GM12878 (cell line): ENCODE measurements at regions of chr18 and their contacts with region 1.

Region 1: DNA sequence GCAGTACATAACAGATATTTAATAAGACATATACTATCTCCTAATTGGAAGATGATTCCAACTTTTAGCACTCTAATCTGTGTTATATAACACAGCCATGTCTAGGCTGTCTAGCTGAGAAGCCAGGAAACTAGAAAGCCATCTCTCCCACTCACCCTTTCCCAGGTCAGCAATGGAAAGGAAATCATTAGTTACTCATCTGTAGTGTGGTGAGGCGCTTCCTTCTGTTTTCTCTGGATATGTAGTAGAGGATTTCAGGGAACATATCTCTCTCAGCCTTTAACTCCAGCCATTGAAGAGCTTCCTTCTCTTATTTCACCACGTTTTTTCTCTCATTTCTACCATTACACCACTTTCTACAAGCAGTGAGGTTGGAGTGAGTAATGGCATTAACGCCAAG is 19.4 kb downstream of the RBBP8 start:
- DNase-seq: no peak
- ATAC-seq: no peak
- H3K4me3 ChIP-seq: no peak overlapping the region
- H3K27ac ChIP-seq: no peak overlapping the region
- H3K4me1 ChIP-seq: no peaks in the 10 kb centered on the region
- H3K27me3 ChIP-seq: no peaks in the 10 kb centered on the region
- CTCF ChIP-seq: no peak
- EP300 ChIP-seq: no peak
- POLR2A ChIP-seq: no peak
- RAD21 ChIP-seq: no peak

Region 2: GRCh38 chr18:22899421-22899820 is 53.1 kb before region 1 on chr18:
- CTCF ChIA-PET with region 1: no interaction called
- POLR2A ChIA-PET with region 1: no interaction called
- RAD21 ChIA-PET with region 1: no interaction called
- SMC1A ChIA-PET with region 1: no interaction called
- in situ Hi-C with region 1: loop called (anchors 10 kb)
- intact Hi-C with region 1: no loop called
- DNase-seq: no peak
- ATAC-seq: no peak
- H3K4me3 ChIP-seq: no peak overlapping the region
- H3K27ac ChIP-seq: no peak overlapping the region
- H3K4me1 ChIP-seq: no peaks in the 10 kb centered on the region
- H3K27me3 ChIP-seq: no peaks in the 10 kb centered on the region
- CTCF ChIP-seq: no peak
- EP300 ChIP-seq: no peak
- POLR2A ChIP-seq: no peak
- RAD21 ChIP-seq: no peak

Region 3: GRCh38 chr18:23053776-23054457 is 101.4 kb after region 1 on chr18:
- CTCF ChIA-PET with region 1: no interaction called
- POLR2A ChIA-PET with region 1: no interaction called
- RAD21 ChIA-PET with region 1: no interaction called
- SMC1A ChIA-PET with region 1: no interaction called
- in situ Hi-C with region 1: no loop called
- intact Hi-C with region 1: no loop called
- DNase-seq: no peak
- ATAC-seq: 0 out of 3 replicates have a peak, but pooled peaks have one; percentile 29
- H3K4me3 ChIP-seq: no peak overlapping the region
- H3K27ac ChIP-seq: no peak overlapping the region
- H3K4me1 ChIP-seq: no peaks in the 10 kb centered on the region
- H3K27me3 ChIP-seq: peaks cover 0 to 1% of the 10 kb centered on the region in 2 experiments; a peak in 1 of 4 replicates
- CTCF ChIP-seq: no peak
- EP300 ChIP-seq: no peak
- POLR2A ChIP-seq: no peak
- RAD21 ChIP-seq: no peak